CD4-positive, alpha-beta T cell (primary cell): ENCODE measurements at regions of chr1 and their contacts with region 1.

Region 1: DNA sequence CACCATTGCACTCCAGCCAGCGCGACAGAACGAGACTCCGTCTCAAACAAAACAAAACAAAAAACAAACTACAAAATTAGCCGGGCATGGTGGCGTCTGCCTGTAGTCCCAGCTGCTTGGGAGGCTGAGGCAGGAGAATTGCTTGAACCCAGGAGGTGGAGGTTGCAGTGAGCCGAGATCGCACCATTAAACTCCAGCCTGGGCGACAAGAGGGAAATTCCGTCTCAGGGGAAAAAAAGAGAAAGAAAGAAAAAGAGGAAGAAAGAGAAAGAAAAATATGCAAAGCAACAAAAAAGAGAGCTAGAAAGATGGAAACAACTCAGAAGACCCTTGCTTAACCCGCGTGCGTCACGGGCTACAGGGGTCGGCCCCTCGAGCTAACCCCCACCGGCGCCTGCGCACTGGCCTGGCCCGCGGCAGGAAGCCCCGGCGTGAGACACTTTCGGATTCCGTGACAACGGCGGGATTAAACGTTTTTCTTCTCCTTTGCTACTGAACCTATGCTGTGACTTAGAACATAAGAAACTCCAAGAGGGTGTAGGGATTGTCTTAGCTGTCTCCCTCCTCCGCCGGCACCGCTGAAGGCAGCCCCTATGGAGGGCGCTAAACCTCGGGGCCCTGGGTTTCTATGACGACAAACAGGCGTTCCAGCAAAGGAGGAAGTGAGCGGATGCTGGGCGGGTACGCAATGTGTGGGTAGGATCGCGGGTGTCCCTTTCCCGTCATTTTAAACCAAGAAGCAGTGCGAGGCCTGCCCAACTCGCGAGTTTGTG is at the start of gene AXDND1:
- DNase-seq: peak; percentile 80 to 96 (median 86)
- ATAC-seq: peak; percentile 90
- H3K4me3 ChIP-seq: peak within 1 kb of the TSS; percentile 79
- H3K4me3 Mint-ChIP-seq: peak within 1 kb of the TSS; percentile 96
- H3K27ac ChIP-seq: peak within 1 kb of the TSS; percentile 94 to 99
- H3K27ac Mint-ChIP-seq: peak within 1 kb of the TSS; percentile 99
- H3K4me1 ChIP-seq: peaks cover 14% of the 10 kb centered on the region
- H3K4me1 Mint-ChIP-seq: peaks cover 14% of the 10 kb centered on the region
- H3K27me3 ChIP-seq: no peaks in the 10 kb centered on the region
- H3K27me3 Mint-ChIP-seq: no peaks in the 10 kb centered on the region
- CTCF ChIP-seq: no peak
- total RNA-seq, gene AXDND1: 1.1 TPM

Region 2: GRCh38 chr1:178725603-178726517 is 639.6 kb before region 1 on chr1:
- CTCF ChIA-PET with region 1: no interaction called
- POLR2A ChIA-PET with region 1: no interaction called
- intact Hi-C with region 1: loop called (anchors 2 to 5 kb)
- DNase-seq: peak; percentile 23 to 85 (median 57)
- ATAC-seq: peak; percentile 84
- H3K4me3 ChIP-seq: peak overlapping the region; percentile 71
- H3K4me3 Mint-ChIP-seq: peak overlapping the region; percentile 93
- H3K27ac ChIP-seq: peak overlapping the region in 1 of 2 donors; percentile 29
- H3K27ac Mint-ChIP-seq: peak overlapping the region; percentile 87
- H3K4me1 ChIP-seq: peaks cover 9% of the 10 kb centered on the region
- H3K4me1 Mint-ChIP-seq: peaks cover 39% of the 10 kb centered on the region
- H3K27me3 ChIP-seq: no peaks in the 10 kb centered on the region
- H3K27me3 Mint-ChIP-seq: no peaks in the 10 kb centered on the region
- CTCF ChIP-seq: no peak

Region 3: DNA sequence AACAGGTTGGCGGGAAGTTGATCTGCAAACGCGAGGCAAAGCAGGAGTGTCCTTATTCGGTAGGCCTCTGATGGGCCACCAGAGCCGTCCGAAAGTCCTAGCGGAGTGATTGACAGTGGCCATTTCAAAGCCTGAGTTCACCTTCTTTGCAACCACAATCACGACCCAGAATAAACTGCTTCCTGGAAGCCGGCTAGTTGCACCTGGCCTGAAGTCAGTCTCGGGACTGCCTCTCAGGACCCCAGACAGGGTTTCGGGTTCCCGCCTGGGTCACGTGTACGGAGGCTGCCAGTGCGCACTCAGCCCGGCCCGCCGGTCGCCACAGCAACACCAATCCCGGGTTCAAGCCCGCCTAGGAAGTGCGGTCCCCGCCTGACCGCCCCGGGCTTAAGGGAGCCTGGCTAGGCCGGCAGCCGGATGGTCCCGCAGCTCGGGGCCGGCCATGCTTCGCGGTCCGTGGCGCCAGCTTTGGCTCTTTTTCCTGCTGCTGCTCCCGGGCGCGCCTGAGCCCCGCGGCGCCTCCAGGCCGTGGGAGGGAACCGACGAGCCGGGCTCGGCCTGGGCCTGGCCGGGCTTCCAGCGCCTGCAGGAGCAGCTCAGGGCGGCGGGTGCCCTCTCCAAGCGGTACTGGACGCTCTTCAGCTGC is 283.7 kb before region 1 on chr1 and contains the start of gene TOR3A:
- CTCF ChIA-PET with region 1: interaction called, 4 read pairs
- POLR2A ChIA-PET with region 1: interaction called, 21 read pairs
- intact Hi-C with region 1: loop called (anchors 1 to 2 kb)
- DNase-seq: peak; percentile 54 to 86 (median 74)
- ATAC-seq: peak; percentile 32
- H3K4me3 ChIP-seq: peak within 1 kb of the TSS; percentile 82
- H3K4me3 Mint-ChIP-seq: peak within 1 kb of the TSS; percentile 99
- H3K27ac ChIP-seq: peak within 1 kb of the TSS; percentile 68 to 81
- H3K27ac Mint-ChIP-seq: peak within 1 kb of the TSS; percentile 92
- H3K4me1 ChIP-seq: peaks cover 32% of the 10 kb centered on the region
- H3K4me1 Mint-ChIP-seq: peaks cover 32% of the 10 kb centered on the region
- H3K27me3 ChIP-seq: no peaks in the 10 kb centered on the region
- H3K27me3 Mint-ChIP-seq: no peaks in the 10 kb centered on the region
- CTCF ChIP-seq: no peak
- total RNA-seq, gene TOR3A: 17.2 TPM

Region 4: GRCh38 chr1:179251675-179252074 is 113.8 kb before region 1 on chr1:
- CTCF ChIA-PET with region 1: no interaction called
- POLR2A ChIA-PET with region 1: interaction called, 3 read pairs
- intact Hi-C with region 1: loop called (anchors 1 kb)
- DNase-seq: peak in 3 of 14 experiments; percentile 39 to 44 (median 40)
- ATAC-seq: no peak
- H3K4me3 ChIP-seq: no peak overlapping the region
- H3K4me3 Mint-ChIP-seq: no peak overlapping the region
- H3K27ac ChIP-seq: no peak overlapping the region
- H3K27ac Mint-ChIP-seq: no peak overlapping the region
- H3K4me1 ChIP-seq: no peaks in the 10 kb centered on the region
- H3K4me1 Mint-ChIP-seq: no peaks in the 10 kb centered on the region
- H3K27me3 ChIP-seq: no peaks in the 10 kb centered on the region
- H3K27me3 Mint-ChIP-seq: no peaks in the 10 kb centered on the region
- CTCF ChIP-seq: peak; percentile 56

Region 5: GRCh38 chr1:179474713-179475112 is 109.2 kb after region 1 on chr1:
- CTCF ChIA-PET with region 1: no interaction called
- POLR2A ChIA-PET with region 1: no interaction called
- intact Hi-C with region 1: no loop called
- DNase-seq: no peak
- ATAC-seq: no peak
- H3K4me3 ChIP-seq: no peak overlapping the region
- H3K4me3 Mint-ChIP-seq: no peak overlapping the region
- H3K27ac ChIP-seq: no peak overlapping the region
- H3K27ac Mint-ChIP-seq: no peak overlapping the region
- H3K4me1 ChIP-seq: no peaks in the 10 kb centered on the region
- H3K4me1 Mint-ChIP-seq: no peaks in the 10 kb centered on the region
- H3K27me3 ChIP-seq: peaks cover 0 to 2% of the 10 kb centered on the region in 2 experiments
- H3K27me3 Mint-ChIP-seq: no peaks in the 10 kb centered on the region
- CTCF ChIP-seq: no peak

Region 6: DNA sequence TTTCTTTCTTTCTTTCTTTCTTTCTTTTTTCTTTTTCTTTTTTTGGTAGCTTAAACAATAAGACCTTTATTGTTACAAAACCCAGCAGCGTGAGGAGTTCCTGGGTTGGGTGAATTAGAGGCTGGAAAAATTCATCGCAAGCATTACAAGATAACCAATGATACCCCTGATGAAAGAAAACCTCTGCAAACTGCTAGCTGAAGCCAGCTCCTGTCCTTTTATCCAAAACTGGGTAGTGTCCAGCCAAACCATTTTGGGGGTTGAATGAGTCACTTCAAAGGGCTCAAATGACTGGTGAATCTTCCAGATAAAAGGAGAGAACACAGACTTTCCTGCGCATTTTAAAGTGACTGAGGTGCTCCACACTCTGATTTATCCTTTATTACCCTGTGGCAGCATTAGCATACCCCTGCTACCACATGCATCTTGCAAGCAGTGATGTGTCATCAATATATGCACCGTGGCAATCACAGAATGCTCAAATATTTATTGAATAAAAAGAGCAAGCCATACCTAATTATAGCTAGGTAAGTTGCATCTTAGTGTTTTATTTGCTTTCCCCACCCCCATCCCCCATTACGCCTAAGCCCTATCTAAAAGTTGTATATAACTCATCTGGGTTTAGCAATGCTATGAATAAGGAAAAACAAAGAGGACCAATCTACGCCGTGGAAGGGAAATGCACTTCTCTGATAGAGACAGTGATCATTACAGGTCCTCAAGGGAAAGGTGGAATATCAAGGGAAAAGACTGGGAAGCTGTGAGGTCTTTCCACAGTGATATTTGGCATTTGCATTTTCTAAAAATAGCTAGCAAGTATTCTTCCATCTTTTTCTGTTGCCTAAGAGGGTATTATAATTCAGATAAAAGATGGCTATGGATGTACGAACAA is 556.7 kb after region 1 on chr1:
- CTCF ChIA-PET with region 1: no interaction called
- POLR2A ChIA-PET with region 1: no interaction called
- intact Hi-C with region 1: no loop called
- DNase-seq: no peak
- ATAC-seq: no peak
- H3K4me3 ChIP-seq: no peak overlapping the region
- H3K4me3 Mint-ChIP-seq: no peak overlapping the region
- H3K27ac ChIP-seq: no peak overlapping the region
- H3K27ac Mint-ChIP-seq: no peak overlapping the region
- H3K4me1 ChIP-seq: no peaks in the 10 kb centered on the region
- H3K4me1 Mint-ChIP-seq: peaks cover 7% of the 10 kb centered on the region
- H3K27me3 ChIP-seq: no peaks in the 10 kb centered on the region
- H3K27me3 Mint-ChIP-seq: no peaks in the 10 kb centered on the region
- CTCF ChIP-seq: no peak

Region 7: DNA sequence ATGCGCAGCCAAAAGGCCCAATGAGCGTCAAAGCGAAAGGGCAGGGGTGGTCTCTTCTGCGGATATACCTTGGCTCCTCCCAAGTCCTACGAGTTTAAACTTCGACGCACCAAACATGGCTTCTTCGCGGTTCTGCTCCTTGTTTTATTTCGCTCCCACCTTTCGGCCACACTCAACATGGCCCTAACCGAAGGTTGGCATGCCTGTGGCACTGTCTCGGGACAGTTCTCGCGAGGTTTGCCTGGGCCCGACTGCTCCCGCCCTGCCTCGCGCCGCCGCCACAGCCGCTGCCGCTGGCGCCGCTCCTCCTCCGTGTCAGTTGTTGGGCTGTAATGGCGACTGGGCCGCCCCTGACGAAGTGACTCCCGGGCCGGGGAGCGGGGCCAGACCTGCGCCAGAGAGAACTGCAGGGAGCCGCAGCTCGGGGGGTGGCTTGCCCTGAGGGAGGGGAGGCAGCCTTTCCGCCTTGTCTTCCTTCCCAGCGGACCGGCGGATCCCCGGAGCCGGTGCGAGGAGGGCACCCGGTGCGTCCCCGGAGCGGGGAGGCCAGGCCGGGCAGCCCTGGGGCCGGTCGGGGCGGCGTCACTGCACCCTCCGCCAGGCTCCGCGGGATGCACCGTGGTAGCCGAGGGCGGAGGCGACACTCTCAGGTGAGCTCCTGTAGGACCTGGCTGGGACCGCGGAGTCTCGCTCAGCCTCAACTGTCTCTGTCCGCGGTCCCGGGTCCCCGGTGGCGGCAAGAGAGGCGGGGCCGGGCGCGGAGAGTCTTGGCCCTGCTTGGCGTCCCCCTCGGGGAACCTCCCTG is 589.2 kb after region 1 on chr1 and contains the start of gene CEP350:
- CTCF ChIA-PET with region 1: no interaction called
- POLR2A ChIA-PET with region 1: no interaction called
- intact Hi-C with region 1: loop called in 1 of 2 experiments (anchors 5 kb)
- DNase-seq: peak; percentile 95 to 100 (median 97)
- ATAC-seq: peak; percentile 84
- H3K4me3 ChIP-seq: peak within 1 kb of the TSS; percentile 87
- H3K4me3 Mint-ChIP-seq: peak within 1 kb of the TSS; percentile 96
- H3K27ac ChIP-seq: peak within 1 kb of the TSS; percentile 82 to 90
- H3K27ac Mint-ChIP-seq: peak within 1 kb of the TSS; percentile 94
- H3K4me1 ChIP-seq: peaks cover 23% of the 10 kb centered on the region
- H3K4me1 Mint-ChIP-seq: peaks cover 71% of the 10 kb centered on the region
- H3K27me3 ChIP-seq: no peaks in the 10 kb centered on the region
- H3K27me3 Mint-ChIP-seq: no peaks in the 10 kb centered on the region
- CTCF ChIP-seq: no peak
- total RNA-seq, gene CEP350: 45.5 to 51.4 TPM